Left lung (tissue), 14 donors: ENCODE measurements at regions of chr20 and their contacts with region 1.

Region 1: GRCh38 chr20:23361598-23362384 is at the start of gene GZF1:
- DNase-seq: peak; percentile 98 to 100 (median 98)
- ATAC-seq: peak; percentile 88
- H3K4me3 ChIP-seq: peak within 1 kb of the TSS; percentile 87 to 90
- H3K27ac ChIP-seq: peak within 1 kb of the TSS; percentile 100
- H3K4me1 ChIP-seq: peaks cover 31 to 68% of the 10 kb centered on the region in 2 donors
- H3K27me3 ChIP-seq: no peaks in the 10 kb centered on the region
- CTCF ChIP-seq: peak in 1 of 2 donors; percentile 62
- polyA plus RNA-seq, gene GZF1: 11.8 to 15.1 (median 13.0) TPM

Region 2: GRCh38 chr20:23419995-23420901 is 58.5 kb after region 1 on chr20:
- intact Hi-C with region 1: loop called in 1 of 2 experiments (anchors 10 kb)
- DNase-seq: peak; percentile 15 to 87 (median 54)
- ATAC-seq: peak; percentile 69
- H3K4me3 ChIP-seq: peak overlapping the region; percentile 83 to 85
- H3K27ac ChIP-seq: peak overlapping the region; percentile 83 to 84
- H3K4me1 ChIP-seq: peaks cover 9 to 37% of the 10 kb centered on the region in 2 donors
- H3K27me3 ChIP-seq: no peaks in the 10 kb centered on the region
- CTCF ChIP-seq: no peak

Region 3: DNA sequence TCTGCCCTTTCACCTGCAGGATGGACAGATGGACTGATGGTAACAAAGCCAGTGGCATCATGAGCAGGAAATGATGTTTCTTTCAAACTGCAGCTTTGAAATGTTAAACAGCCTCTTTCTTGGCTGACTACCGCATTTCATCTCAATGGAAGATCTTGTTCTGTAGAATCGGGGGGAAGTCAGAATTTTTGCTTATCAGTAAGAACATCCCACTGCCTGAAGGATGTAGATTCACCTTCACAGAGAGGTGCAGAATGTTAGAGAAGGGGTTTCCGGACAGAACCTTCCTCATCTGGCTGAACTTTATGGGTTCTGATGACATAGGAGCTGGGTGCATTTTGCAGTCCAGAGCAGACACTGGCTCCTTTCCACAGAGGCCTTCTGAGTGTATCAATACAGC is 594.1 kb after region 1 on chr20:
- intact Hi-C with region 1: no loop called
- DNase-seq: no peak
- ATAC-seq: no peak
- H3K4me3 ChIP-seq: no peak overlapping the region
- H3K27ac ChIP-seq: no peak overlapping the region
- H3K4me1 ChIP-seq: no peaks in the 10 kb centered on the region
- H3K27me3 ChIP-seq: no peaks in the 10 kb centered on the region
- CTCF ChIP-seq: no peak